ENCODE measurements at regions of chr18 and their contacts with region 1.

Region 1: DNA sequence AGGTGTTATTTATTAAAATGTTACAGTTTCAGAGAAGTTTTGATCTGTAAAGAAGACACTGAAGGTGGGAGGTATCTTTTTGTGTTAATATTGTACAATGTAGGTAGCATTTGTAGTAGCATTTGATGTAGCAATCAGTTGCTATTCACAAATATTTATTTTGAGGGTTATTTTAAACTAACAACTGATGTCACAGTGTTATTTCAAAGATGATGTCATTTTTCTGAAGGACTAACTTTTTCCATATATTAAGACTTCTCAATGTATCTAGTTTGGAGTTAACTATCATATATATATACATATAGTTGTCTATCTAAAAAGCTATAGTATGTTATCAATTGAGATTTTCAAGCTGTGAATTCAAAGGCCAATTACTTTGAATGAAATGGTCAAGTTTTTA is 1003.3 kb downstream of the DSC3 start:
- DNase-seq: no peak
- ATAC-seq: no peak
- H3K4me3 ChIP-seq: no peak overlapping the region
- H3K4me3 Mint-ChIP-seq: no peak overlapping the region
- H3K27ac ChIP-seq: no peak overlapping the region
- H3K27ac Mint-ChIP-seq: no peak overlapping the region
- H3K4me1 ChIP-seq: no peaks in the 10 kb centered on the region
- H3K4me1 Mint-ChIP-seq: no peaks in the 10 kb centered on the region
- H3K27me3 ChIP-seq: no peaks in the 10 kb centered on the region
- H3K27me3 Mint-ChIP-seq: no peaks in the 10 kb centered on the region
- CTCF ChIP-seq: no peak

Region 2: DNA sequence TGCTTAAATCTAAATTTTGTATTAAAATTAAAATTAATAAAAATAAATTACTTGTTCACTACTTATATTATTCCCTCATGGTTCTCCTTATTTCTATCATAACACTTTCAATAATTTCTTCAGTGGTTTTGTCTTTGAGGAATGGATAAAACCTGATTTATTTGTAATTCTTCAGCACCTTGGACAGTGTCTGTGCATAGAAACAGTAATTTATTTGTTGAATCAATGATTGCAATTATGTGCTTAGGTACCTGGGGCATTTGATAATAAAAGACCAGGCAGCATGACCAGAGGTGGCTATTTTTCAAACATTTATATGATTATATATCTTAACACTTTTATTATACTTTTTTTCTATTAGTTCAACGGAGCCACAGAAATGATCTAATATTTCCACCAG is 59.3 kb before region 1 on chr18:
- intact Hi-C with region 1: loop called (anchors 10 kb)
- DNase-seq: no peak
- ATAC-seq: no peak
- H3K4me3 ChIP-seq: no peak overlapping the region
- H3K4me3 Mint-ChIP-seq: no peak overlapping the region
- H3K27ac ChIP-seq: no peak overlapping the region
- H3K27ac Mint-ChIP-seq: no peak overlapping the region
- H3K4me1 ChIP-seq: no peaks in the 10 kb centered on the region
- H3K4me1 Mint-ChIP-seq: no peaks in the 10 kb centered on the region
- H3K27me3 ChIP-seq: no peaks in the 10 kb centered on the region
- H3K27me3 Mint-ChIP-seq: no peaks in the 10 kb centered on the region
- CTCF ChIP-seq: no peak

Region 3: DNA sequence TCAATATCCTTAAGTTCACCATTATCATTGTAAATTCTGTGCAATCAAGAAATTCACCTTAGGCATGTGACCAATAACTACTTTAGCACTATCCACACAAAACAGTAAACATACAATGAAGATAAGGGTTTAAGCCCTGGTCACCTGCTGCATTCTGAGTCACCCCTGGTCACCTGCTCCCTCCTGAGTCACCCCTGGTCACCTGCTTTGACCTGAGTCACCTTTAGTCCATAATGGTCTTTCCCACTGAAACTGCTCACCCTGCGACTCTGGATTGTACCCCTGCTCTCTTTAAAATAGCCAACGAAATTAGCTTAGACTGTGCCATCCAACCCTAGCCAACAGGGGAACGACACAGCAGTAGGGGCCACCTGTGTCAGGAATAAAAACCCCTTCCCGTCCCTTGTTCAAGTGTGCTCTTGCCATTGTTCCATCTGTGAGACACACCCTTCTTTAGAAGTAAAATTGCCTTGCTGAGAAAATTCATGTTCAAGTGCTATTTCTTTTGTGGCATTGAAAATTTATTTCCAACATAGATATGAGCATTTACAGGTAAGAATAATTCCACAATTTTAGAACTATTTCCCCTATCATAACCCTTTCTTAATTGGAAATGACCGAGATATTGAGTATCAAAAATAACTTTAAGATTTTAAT is 100.6 kb after region 1 on chr18:
- intact Hi-C with region 1: no loop called
- DNase-seq: no peak
- ATAC-seq: no peak
- H3K4me3 ChIP-seq: no peak overlapping the region
- H3K4me3 Mint-ChIP-seq: no peak overlapping the region
- H3K27ac ChIP-seq: no peak overlapping the region
- H3K27ac Mint-ChIP-seq: no peak overlapping the region
- H3K4me1 ChIP-seq: no peaks in the 10 kb centered on the region
- H3K4me1 Mint-ChIP-seq: no peaks in the 10 kb centered on the region
- H3K27me3 ChIP-seq: no peaks in the 10 kb centered on the region
- H3K27me3 Mint-ChIP-seq: no peaks in the 10 kb centered on the region
- CTCF ChIP-seq: no peak